T-cell (primary cell): ENCODE measurements at regions of chr7 and their contacts with region 1.

Region 1: DNA sequence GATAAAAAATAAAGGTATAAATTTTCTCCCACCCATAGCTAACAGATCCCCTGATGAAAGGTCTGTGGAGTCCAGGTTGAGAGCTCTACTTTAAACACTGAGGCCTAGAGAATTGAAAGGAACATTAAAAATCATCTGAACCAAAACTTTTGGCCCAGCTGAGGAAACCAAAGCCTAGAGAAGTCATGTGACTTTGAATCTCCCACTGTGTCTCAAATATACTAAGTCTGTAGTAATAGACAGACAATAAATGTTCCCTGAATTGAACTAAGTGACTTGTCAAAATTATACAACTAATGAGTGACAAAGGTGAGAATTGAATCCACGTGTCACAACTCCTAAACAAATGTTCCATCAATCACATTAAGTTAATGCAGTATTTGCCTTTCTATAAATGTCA is 5.7 kb downstream of the GBX1 start:
- DNase-seq: no peak
- ATAC-seq: no peak
- H3K4me3 ChIP-seq: no peak overlapping the region
- H3K4me3 Mint-ChIP-seq: no peak overlapping the region
- H3K27ac ChIP-seq: no peak overlapping the region
- H3K27ac Mint-ChIP-seq: no peak overlapping the region
- H3K4me1 ChIP-seq: peaks cover 2 to 4% of the 10 kb centered on the region in 2 experiments
- H3K4me1 Mint-ChIP-seq: peaks cover 0 to 4% (median 4%) of the 10 kb centered on the region in 3 donors
- H3K27me3 ChIP-seq: peaks cover 14 to 27% of the 10 kb centered on the region in 2 experiments
- H3K27me3 Mint-ChIP-seq: peaks cover 8 to 14% of the 10 kb centered on the region in 2 donors

Region 2: DNA sequence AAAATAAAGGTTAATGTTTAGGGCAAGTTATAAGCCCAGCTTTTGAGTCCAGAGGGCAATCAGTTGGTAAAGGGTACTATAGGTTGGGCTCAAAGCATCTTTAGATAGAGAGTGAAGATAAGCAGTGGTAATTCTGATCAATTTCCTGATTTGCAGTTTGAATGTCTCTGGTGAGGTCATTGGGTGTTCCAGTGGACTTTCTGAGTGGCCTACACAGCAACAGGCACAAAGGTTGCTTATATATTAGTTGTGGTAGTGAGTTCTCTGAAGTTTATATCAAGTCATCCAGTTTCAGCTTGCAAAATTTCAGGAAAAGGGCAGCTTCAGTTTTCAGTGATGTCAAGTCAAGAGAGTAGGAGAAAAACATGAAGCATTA is 395.4 kb before region 1 on chr7:
- CTCF ChIA-PET with region 1: interaction called in 1 of 2 experiments, 10 read pairs
- POLR2A ChIA-PET with region 1: no interaction called
- DNase-seq: no peak
- ATAC-seq: no peak
- H3K4me3 ChIP-seq: no peak overlapping the region
- H3K4me3 Mint-ChIP-seq: no peak overlapping the region
- H3K27ac ChIP-seq: no peak overlapping the region
- H3K27ac Mint-ChIP-seq: no peak overlapping the region
- H3K4me1 ChIP-seq: no peaks in the 10 kb centered on the region
- H3K4me1 Mint-ChIP-seq: no peaks in the 10 kb centered on the region
- H3K27me3 ChIP-seq: peaks cover 0 to 7% of the 10 kb centered on the region in 2 experiments
- H3K27me3 Mint-ChIP-seq: no peaks in the 10 kb centered on the region